PC-3 (cell line): ENCODE measurements at regions of chr12 and their contacts with region 1.

Region 1: DNA sequence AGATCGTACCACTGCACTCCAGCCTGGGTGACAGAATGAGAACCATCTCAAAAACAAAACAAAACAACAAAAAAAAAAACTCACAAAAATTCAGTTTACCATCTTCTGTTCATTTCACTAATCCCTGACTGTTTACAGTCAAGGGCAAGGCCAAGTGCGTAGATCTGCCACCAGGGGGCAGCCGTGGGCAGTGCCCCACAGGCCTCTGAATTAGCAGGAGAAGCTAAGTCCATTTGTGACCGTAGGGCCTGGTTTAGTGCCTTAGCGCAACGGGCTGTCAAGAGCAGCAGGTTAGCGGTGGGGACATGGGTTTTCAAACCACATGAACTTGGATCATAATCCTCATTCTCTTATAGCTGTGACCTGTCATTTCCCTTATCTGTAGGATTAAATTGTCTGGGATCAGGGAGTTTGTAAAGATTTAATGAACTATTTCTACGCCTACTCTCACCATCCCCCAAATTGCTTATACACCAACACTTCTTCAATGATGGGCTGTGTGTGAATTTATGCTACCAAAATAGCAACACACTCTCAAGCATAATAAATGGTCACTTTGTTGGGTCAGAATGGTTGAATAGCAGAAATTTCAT is 49.0 kb downstream of the KCTD10 start:
- DNase-seq: peak; percentile 91
- ATAC-seq: peak; percentile 84
- H3K4me3 ChIP-seq: no peak overlapping the region
- H3K27ac ChIP-seq: no peak overlapping the region
- H3K4me1 ChIP-seq: peaks cover 4% of the 10 kb centered on the region
- H3K27me3 ChIP-seq: 0 out of 2 replicates have a peak, but pooled peaks cover 2% of the 10 kb centered on the region
- CTCF ChIP-seq: peak; percentile 98

Region 2: GRCh38 chr12:109069307-109070231 is 358.6 kb before region 1 on chr12:
- CTCF ChIA-PET with region 1: no interaction called
- POLR2A ChIA-PET with region 1: no interaction called
- intact Hi-C with region 1: no loop called
- DNase-seq: no peak
- ATAC-seq: no peak
- H3K4me3 ChIP-seq: no peak overlapping the region
- H3K27ac ChIP-seq: no peak overlapping the region
- H3K4me1 ChIP-seq: no peaks in the 10 kb centered on the region
- H3K27me3 ChIP-seq: no peaks in the 10 kb centered on the region
- CTCF ChIP-seq: no peak

Region 3: DNA sequence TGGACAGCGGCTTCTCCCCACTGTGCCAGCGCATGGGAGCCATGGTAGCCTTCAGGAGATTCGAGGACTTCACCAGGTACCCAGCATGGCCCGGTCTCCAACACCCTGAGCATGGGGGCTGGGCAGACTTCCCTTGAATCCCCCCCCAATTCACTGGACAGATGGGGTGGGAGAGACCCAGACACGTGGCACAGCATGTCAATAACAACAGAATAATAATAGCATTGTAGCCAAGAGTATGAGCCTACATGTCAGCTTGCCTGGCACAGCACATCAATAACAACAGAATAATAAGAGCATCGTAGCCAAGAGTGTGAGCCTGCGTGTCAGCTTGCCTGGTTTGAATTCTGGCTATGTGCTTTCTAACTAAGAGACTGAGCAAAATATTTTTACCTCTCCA is 195.4 kb before region 1 on chr12:
- CTCF ChIA-PET with region 1: no interaction called
- POLR2A ChIA-PET with region 1: no interaction called
- intact Hi-C with region 1: no loop called
- DNase-seq: no peak
- ATAC-seq: no peak
- H3K4me3 ChIP-seq: no peak overlapping the region
- H3K27ac ChIP-seq: no peak overlapping the region
- H3K4me1 ChIP-seq: no peaks in the 10 kb centered on the region
- H3K27me3 ChIP-seq: no peaks in the 10 kb centered on the region
- CTCF ChIP-seq: no peak

Region 4: GRCh38 chr12:109449845-109450532 is 21.9 kb after region 1 on chr12:
- CTCF ChIA-PET with region 1: interaction called, 4 read pairs
- POLR2A ChIA-PET with region 1: no interaction called
- intact Hi-C with region 1: loop called (anchors 1 kb)
- DNase-seq: no peak
- ATAC-seq: no peak
- H3K4me3 ChIP-seq: no peak overlapping the region
- H3K27ac ChIP-seq: no peak overlapping the region
- H3K4me1 ChIP-seq: peaks cover 12% of the 10 kb centered on the region
- H3K27me3 ChIP-seq: no peaks in the 10 kb centered on the region
- CTCF ChIP-seq: no peak; the same call in 1 of the 2 replicates

Region 5: DNA sequence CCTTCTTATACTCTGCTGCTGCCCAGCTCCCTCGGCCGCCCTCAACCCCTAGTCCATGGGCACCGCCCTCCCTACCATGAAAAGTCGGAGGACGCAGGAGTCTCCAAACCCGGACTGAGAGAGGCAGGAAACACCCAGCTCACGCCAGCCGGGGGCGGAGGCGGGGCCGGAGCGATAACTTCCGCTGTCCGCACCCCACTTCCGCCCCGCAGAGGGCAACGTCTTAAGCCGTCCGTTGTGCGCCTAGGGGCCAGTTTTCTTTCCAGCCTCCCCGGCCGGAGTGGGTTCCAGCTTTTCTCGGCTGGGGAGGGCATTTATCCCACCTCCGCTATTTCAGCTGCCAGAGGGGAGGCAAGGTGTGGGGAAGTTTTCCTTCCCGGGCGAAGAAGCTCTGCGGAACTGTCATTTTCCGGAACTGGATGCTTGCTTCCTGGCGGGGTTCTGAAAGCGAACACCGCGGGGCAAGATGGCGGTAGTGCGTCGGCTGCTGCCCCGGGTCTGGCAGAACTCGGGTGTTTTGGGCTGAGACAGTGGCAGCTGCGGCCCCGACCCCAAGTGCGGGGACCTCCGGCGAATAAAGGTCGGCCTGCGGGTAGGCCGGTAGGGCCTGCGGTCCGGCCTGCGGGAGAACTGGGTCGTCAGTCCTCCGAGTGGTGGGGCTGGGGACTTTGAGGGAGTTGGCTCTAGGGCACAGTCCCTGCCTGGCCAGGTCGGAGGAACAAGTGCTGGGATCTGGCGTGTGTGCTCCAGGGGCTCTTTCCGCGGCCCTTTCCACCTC is 49.2 kb after region 1 on chr12 and contains the starts of genes KCTD10 and UBE3B:
- CTCF ChIA-PET with region 1: interaction called, 4 read pairs
- POLR2A ChIA-PET with region 1: no interaction called
- intact Hi-C with region 1: loop called (anchors 1 kb)
- DNase-seq: peak; percentile 93
- ATAC-seq: peak; percentile 93
- H3K4me3 ChIP-seq: peak within 1 kb of the TSS; percentile 90
- H3K27ac ChIP-seq: peak within 1 kb of the TSS; percentile 65
- H3K4me1 ChIP-seq: peaks cover 20% of the 10 kb centered on the region
- H3K27me3 ChIP-seq: no peaks in the 10 kb centered on the region
- CTCF ChIP-seq: no peak
- total RNA-seq, gene KCTD10: 42.3 and 58.1 TPM in 2 replicates
- total RNA-seq, gene UBE3B: 25.7 and 35.6 TPM in 2 replicates

Region 6: GRCh38 chr12:109573029-109573913 is 145.1 kb after region 1 on chr12 and contains the starts of genes MMAB and MVK:
- CTCF ChIA-PET with region 1: interaction called, 10 read pairs
- POLR2A ChIA-PET with region 1: no interaction called
- intact Hi-C with region 1: no loop called
- DNase-seq: peak; percentile 100
- ATAC-seq: peak; percentile 96
- H3K4me3 ChIP-seq: peak within 1 kb of the TSS; percentile 81
- H3K27ac ChIP-seq: peak within 1 kb of the TSS; percentile 57
- H3K4me1 ChIP-seq: peaks cover 16% of the 10 kb centered on the region
- H3K27me3 ChIP-seq: no peaks in the 10 kb centered on the region
- CTCF ChIP-seq: no peak
- total RNA-seq, gene MMAB: 83.0 and 83.5 TPM in 2 replicates
- total RNA-seq, gene MVK: 47.8 and 52.2 TPM in 2 replicates

Region 7: DNA sequence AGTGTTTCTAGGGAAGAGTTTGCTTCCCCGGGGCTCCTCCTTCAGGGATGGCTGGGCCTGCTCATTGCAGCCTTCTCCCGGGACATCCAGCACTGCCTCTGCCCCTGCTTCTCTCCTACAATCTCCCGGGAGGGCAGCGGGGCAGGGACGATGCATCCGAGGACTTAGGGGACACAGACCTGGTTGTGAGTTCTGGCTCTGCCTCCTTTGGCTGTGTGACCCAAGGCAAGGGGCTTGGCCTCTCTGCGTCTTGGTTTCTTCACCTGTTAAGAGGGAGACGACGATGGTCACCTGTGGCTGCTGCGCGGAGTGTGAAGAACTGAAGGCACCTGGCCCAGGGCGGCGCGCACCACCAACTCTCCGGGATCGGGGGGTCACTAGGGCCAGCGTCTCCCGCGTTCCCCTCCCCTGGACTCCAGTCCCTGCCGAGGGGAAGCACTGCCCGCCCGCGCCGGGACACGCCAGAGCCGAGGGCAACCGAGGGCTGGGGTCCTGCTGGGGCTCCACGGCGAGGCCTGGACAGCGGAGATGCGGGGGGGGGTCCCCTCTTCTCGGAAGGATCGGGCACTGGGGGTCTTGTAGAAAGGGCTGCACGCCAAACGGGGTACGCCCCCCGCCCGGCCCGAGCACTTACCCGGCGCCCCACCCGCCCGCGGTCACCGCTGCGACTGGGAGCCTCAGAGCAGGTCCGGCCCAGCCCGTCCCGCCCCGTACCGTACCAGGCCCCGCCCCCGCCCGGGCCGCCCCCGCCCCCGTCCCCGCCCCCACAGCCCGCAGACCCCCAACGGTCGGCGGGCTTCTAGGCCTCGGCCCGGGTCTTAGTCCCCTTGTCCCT is 1260.5 kb after region 1 on chr12 and contains the start of gene HVCN1:
- CTCF ChIA-PET with region 1: no interaction called
- POLR2A ChIA-PET with region 1: no interaction called
- intact Hi-C with region 1: no loop called
- DNase-seq: no peak
- ATAC-seq: no peak
- H3K4me3 ChIP-seq: no peak within 1 kb of the TSS
- H3K27ac ChIP-seq: no peak within 1 kb of the TSS
- H3K4me1 ChIP-seq: no peaks in the 10 kb centered on the region
- H3K27me3 ChIP-seq: peaks cover 16% of the 10 kb centered on the region
- CTCF ChIP-seq: no peak
- total RNA-seq, gene HVCN1: 2.2 and 3.3 TPM in 2 replicates